ENCODE measurements at regions of chr12 and their contacts with region 1.

Region 1: GRCh38 chr12:64560396-64561304 is 49.6 kb upstream of the RASSF3 start:
- DNase-seq: peak; percentile 44 to 73
- H3K4me3 ChIP-seq: no peak overlapping the region
- H3K27ac ChIP-seq: no peak overlapping the region
- H3K4me1 ChIP-seq: peaks cover 19% of the 10 kb centered on the region
- H3K27me3 ChIP-seq: no peaks in the 10 kb centered on the region
- CTCF ChIP-seq: no peak

Region 2: DNA sequence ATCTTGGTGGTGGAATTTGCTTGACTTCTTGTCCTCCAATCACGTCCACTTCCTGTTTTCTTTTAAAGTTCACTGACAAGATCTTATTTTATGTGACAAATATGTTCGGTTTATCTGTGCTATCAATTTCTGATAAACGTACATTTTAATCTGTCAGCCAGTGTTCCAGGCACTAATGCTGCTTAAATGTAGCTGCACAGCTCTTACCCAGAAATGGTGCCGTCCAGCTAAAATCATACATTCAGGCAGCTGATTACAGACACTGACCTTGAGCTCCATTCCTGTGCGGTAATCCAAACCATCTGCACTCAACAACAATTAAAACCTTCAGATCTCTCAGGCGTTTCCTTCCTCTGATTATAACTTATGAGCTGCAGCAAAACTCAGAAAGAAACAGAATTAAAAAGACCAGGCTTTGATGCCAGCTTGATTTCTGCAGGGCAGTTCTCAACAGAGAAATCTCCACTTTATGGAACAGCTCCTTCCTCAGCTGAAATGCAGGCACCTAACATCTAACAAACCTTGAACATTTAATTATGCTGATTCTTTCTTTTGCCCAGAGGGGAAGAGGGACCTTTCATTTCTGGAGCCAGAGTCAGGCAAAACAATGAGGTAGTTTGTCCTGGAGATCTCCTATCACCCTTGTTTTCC is 23.2 kb after region 1 on chr12:
- CTCF ChIA-PET with region 1: no interaction called
- POLR2A ChIA-PET with region 1: interaction called, 24 read pairs
- intact Hi-C with region 1: no loop called
- DNase-seq: no peak
- H3K4me3 ChIP-seq: no peak overlapping the region
- H3K27ac ChIP-seq: no peak overlapping the region
- H3K4me1 ChIP-seq: no peaks in the 10 kb centered on the region
- H3K27me3 ChIP-seq: no peaks in the 10 kb centered on the region
- CTCF ChIP-seq: no peak

Region 3: DNA sequence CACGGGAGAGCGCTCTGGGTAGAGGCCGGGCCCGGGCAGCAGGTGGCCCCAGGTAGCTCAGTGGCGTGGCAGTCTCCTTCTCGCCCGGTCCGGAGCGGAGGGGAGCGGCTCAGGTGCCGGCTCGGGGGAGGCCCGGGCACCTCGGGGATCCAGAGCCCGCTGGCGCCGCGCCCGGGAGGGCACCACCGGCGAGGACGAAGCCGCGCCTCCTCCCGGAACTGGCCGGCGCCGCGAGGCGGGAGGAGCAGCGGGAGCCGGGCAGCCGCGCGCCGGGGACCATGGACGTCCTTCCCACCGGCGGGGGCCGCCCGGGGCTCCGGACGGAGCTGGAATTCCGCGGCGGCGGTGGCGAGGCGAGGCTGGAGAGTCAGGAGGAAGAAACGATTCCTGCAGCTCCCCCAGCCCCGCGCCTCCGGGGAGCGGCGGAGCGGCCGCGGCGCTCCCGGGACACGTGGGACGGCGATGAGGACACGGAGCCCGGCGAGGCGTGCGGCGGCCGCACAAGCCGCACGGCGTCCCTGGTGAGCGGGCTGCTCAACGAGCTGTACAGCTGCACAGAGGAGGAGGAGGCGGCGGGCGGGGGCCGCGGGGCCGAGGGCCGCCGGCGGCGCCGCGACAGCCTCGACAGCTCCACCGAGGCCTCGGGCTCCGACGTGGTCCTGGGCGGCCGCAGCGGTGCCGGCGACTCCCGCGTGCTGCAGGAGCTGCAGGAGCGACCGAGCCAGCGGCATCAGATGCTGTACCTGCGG is 220.1 kb after region 1 on chr12:
- CTCF ChIA-PET with region 1: no interaction called
- POLR2A ChIA-PET with region 1: interaction called, 14 read pairs
- intact Hi-C with region 1: no loop called
- DNase-seq: peak; percentile 66 to 69
- H3K4me3 ChIP-seq: peak overlapping the region; percentile 77
- H3K27ac ChIP-seq: peak overlapping the region; percentile 81
- H3K4me1 ChIP-seq: peaks cover 28% of the 10 kb centered on the region
- H3K27me3 ChIP-seq: no peaks in the 10 kb centered on the region
- CTCF ChIP-seq: no peak